Heart right ventricle (tissue), 16 donors: ENCODE measurements at regions of chr4 and their contacts with region 1.

Region 1: GRCh38 chr4:115090483-115091075 is 22.8 kb downstream of the NDST4 start:
- DNase-seq: no peak
- ATAC-seq: no peak
- H3K4me3 ChIP-seq: no peak overlapping the region
- H3K27ac ChIP-seq: no peak overlapping the region
- H3K4me1 ChIP-seq: no peaks in the 10 kb centered on the region
- H3K27me3 ChIP-seq: no peaks in the 10 kb centered on the region
- CTCF ChIP-seq: peak in 8 of 9 donors; percentile 13 to 60 (median 48)

Region 2: GRCh38 chr4:113248320-113248719 is 1842.3 kb before region 1 on chr4:
- intact Hi-C with region 1: loop called in 1 of 10 experiments (anchors 5 kb)
- DNase-seq: no peak
- ATAC-seq: peak in 1 of 8 donors; percentile 39
- H3K4me3 ChIP-seq: no peak overlapping the region
- H3K27ac ChIP-seq: no peak overlapping the region
- H3K4me1 ChIP-seq: no peaks in the 10 kb centered on the region
- H3K27me3 ChIP-seq: no peaks in the 10 kb centered on the region
- CTCF ChIP-seq: peak in 2 of 9 donors; percentile 6 to 26

Region 3: DNA sequence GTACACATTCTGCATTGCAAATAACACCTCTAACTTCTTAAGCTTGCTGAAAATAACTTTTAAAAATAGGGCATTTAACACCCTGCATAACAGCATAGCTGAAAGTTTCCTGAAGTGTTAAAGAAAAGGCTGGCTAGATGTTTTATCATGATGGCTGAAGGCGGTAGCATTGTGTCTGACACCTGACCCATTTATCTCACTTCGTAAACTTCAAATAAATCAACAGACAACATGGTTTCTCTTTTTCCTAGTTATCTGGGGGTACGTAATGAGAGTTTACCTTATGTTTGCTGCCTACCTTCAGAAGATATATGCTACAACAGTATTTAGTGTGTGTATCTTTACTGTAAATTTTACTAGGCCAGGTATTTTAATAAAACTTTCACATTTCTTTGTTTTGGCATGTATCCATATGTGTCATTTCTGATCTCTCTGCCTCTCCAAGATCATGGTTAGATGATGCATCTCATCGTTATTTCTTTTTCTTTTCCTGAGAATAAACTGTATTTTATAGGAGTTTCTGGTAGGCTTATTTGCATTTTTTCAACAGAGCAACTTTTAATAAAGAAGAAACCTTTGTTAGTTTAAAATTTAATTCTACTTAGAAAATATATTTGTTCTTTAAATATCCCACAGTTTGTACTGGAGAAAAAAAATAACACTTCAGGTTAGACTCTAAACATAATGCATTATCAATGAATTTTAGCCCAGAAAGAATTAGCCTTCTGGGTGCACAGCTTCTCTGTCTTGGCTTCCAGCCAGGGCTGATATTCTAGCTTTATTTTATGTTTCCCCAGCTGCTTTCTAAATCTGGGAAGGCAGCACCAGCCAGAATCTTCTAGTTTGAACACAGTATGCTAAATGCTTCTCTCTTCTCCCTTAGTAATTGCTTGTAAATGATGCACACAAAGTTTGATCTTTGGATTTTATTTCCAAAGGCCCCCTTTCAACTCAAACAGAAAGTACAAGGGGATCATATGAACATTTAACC is 19.9 kb after region 1 on chr4:
- intact Hi-C with region 1: no loop called
- DNase-seq: no peak
- ATAC-seq: no peak
- H3K4me3 ChIP-seq: no peak overlapping the region
- H3K27ac ChIP-seq: no peak overlapping the region
- H3K4me1 ChIP-seq: no peaks in the 10 kb centered on the region
- H3K27me3 ChIP-seq: no peaks in the 10 kb centered on the region
- CTCF ChIP-seq: no peak

Region 4: GRCh38 chr4:115537387-115537786 is 446.8 kb after region 1 on chr4:
- intact Hi-C with region 1: loop called in 1 of 10 experiments (anchors 5 kb)
- DNase-seq: no peak
- ATAC-seq: no peak
- H3K4me3 ChIP-seq: no peak overlapping the region
- H3K27ac ChIP-seq: no peak overlapping the region
- H3K4me1 ChIP-seq: no peaks in the 10 kb centered on the region
- H3K27me3 ChIP-seq: no peaks in the 10 kb centered on the region
- CTCF ChIP-seq: peak in 2 of 9 donors; percentile 5 to 36